Caco-2 (cell line): ENCODE measurements at regions of chr2 and their contacts with region 1.

Region 1: DNA sequence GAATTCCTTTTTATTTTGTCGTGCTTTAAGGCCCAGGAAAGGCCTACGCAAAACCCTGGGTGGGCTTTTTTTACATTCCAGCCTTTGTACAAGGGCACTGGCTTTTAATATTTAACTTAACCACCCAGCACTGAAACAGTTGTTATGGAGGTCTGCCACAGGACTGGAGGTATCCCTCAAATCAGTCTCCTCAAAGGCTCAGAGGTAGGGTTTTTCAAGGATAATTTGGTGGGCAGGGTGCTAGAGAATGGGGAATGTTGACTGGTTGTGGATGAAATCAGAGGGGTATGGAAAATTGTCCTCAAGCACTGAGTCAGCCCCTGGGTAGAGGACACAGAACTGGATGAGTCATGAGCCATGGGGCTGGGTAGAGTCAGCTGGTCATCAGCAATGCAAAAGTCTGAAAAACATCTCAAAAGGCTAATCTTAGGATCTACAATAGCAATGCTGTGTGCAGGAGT is 443.1 kb downstream of the THSD7B start:
- DNase-seq: peak; percentile 71 to 75
- H3K4me3 ChIP-seq: peak overlapping the region; percentile 11; the same call in 1 of the 2 replicates
- H3K4me3 Mint-ChIP-seq: peak overlapping the region; percentile 68
- H3K27ac Mint-ChIP-seq: peak overlapping the region; percentile 91
- H3K4me1 ChIP-seq: peaks cover 36% of the 10 kb centered on the region
- H3K4me1 Mint-ChIP-seq: peaks cover 27% of the 10 kb centered on the region
- H3K27me3 ChIP-seq: no peaks in the 10 kb centered on the region
- H3K27me3 Mint-ChIP-seq: no peaks in the 10 kb centered on the region
- CTCF ChIP-seq: no peak

Region 2: DNA sequence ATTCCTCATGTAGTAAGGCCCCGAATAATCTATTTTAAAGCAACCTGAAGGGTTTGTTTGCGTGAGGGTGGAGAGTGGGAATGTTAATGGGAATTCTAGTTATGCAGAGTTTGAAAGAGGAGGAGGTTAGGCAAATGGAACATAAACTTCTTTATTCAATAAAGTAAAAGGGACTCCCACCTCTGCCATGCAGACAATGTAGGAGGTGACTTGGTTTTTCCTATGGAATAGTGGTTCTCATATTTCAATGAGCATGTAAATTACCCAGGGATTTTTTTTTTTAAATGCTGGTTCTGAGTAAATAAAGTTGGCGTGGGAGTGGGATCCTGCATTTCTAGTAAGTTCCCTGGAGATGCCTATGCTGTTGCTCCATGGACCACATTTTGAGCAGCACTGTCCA is 75.2 kb before region 1 on chr2:
- CTCF ChIA-PET with region 1: no interaction called
- POLR2A ChIA-PET with region 1: no interaction called
- intact Hi-C with region 1: loop called (anchors 1 kb)
- DNase-seq: no peak
- H3K4me3 ChIP-seq: no peak overlapping the region
- H3K4me3 Mint-ChIP-seq: peak overlapping the region; percentile 3
- H3K27ac Mint-ChIP-seq: no peak overlapping the region
- H3K4me1 ChIP-seq: peaks cover 11% of the 10 kb centered on the region
- H3K4me1 Mint-ChIP-seq: no peaks in the 10 kb centered on the region
- H3K27me3 ChIP-seq: no peaks in the 10 kb centered on the region
- H3K27me3 Mint-ChIP-seq: no peaks in the 10 kb centered on the region
- CTCF ChIP-seq: no peak

Region 3: DNA sequence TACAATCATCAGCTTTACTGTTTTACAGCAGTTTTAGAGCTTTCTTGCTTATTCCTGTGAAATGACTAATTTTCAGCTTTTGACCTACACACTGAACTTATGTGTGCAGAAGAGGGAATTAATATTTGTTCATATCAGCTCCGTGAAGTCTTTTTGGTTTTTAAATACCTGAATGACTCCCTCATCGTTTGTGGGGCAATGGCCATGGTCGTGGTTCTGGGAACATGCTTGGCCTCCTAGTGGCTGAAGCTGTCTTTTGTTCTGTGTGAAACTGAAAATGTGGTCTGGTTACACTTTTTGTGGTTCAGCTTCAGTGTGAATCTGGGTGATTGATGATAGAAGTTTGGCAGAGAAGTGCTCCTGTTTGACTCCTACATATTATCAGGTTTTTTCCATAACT is 35.0 kb before region 1 on chr2:
- CTCF ChIA-PET with region 1: no interaction called
- POLR2A ChIA-PET with region 1: no interaction called
- intact Hi-C with region 1: loop called (anchors 1 kb)
- DNase-seq: peak; percentile 42 to 54
- H3K4me3 ChIP-seq: no peak overlapping the region
- H3K4me3 Mint-ChIP-seq: no peak overlapping the region
- H3K27ac Mint-ChIP-seq: peak overlapping the region; percentile 42
- H3K4me1 ChIP-seq: peaks cover 19% of the 10 kb centered on the region
- H3K4me1 Mint-ChIP-seq: peaks cover 19% of the 10 kb centered on the region
- H3K27me3 ChIP-seq: no peaks in the 10 kb centered on the region
- H3K27me3 Mint-ChIP-seq: no peaks in the 10 kb centered on the region
- CTCF ChIP-seq: peak; percentile 47 to 49

Region 4: DNA sequence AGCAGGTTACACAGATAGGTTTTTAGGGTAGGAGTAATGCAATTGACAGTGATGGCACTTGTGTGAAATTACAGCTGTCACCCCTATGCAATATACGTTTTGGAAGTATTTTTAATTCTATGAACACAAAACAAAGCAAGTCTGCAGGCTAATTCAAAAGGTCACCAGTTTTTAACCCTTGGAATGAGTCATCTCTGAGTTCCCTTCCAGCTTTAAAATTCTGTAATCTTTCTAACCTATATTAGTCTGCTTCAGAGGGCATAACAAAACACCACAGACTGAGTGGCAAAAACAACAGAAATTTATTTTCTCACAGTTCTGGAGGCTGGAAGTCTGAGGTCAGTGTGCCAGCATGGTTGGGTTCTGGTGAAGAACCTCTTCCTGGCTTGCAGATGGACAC is 158.9 kb after region 1 on chr2:
- CTCF ChIA-PET with region 1: no interaction called
- POLR2A ChIA-PET with region 1: no interaction called
- intact Hi-C with region 1: no loop called
- DNase-seq: no peak
- H3K4me3 ChIP-seq: no peak overlapping the region
- H3K4me3 Mint-ChIP-seq: no peak overlapping the region
- H3K27ac Mint-ChIP-seq: no peak overlapping the region
- H3K4me1 ChIP-seq: no peaks in the 10 kb centered on the region
- H3K4me1 Mint-ChIP-seq: no peaks in the 10 kb centered on the region
- H3K27me3 ChIP-seq: no peaks in the 10 kb centered on the region
- H3K27me3 Mint-ChIP-seq: no peaks in the 10 kb centered on the region
- CTCF ChIP-seq: no peak

Region 5: GRCh38 chr2:137411570-137411969 is 203.1 kb after region 1 on chr2:
- CTCF ChIA-PET with region 1: no interaction called
- POLR2A ChIA-PET with region 1: no interaction called
- intact Hi-C with region 1: loop called (anchors 2 kb)
- DNase-seq: peak; percentile 85 to 92
- H3K4me3 ChIP-seq: no peak overlapping the region
- H3K4me3 Mint-ChIP-seq: peak overlapping the region; percentile 55
- H3K27ac Mint-ChIP-seq: peak overlapping the region; percentile 89
- H3K4me1 ChIP-seq: peaks cover 18% of the 10 kb centered on the region
- H3K4me1 Mint-ChIP-seq: peaks cover 14% of the 10 kb centered on the region
- H3K27me3 ChIP-seq: no peaks in the 10 kb centered on the region
- H3K27me3 Mint-ChIP-seq: no peaks in the 10 kb centered on the region
- CTCF ChIP-seq: no peak